H1 (cell line): ENCODE measurements at regions of chr19 and their contacts with region 1.

Region 1: DNA sequence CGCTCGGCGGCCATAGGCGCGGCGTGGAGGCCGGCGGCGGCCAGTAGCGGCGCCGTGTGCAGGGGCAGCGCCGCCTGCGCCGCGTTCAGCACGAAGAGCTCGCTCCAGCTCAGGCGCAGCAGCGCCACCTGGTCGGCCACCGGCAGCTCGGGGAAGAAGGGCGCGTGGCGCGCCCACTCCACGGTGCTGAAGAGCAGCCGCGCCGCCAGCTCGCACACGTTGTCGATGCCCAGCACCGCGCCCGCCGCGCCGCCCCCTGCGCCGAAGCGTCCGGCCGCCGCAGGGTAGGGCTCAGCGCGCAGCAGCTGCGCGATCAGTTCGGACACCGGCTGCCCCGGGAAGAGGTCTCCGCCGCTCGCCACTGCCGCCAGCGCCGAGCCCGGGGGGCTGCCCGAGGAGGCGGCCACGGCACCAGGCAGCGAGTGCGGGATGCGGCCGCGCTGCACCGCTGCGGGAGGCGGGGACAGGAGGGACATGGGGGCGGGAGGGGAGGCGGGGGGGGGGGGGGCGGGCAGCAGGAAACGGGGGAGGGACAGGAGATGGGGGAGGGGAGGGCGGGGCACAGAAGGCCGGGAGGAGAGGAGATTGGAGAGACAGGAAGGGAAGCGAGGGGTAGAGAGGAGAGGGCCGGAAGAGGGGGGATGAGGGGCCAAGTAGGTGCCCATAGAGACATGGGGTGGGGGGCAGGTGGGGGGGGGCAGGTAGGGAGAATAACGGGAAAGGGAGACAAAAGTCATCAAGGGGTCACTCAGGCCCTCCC is 9.8 kb downstream of the OCEL1 start:
- DNase-seq: peak in 1 of 2 experiments; percentile 80
- H3K4me3 ChIP-seq: peak overlapping the region; percentile 80 to 89 (median 86)
- H3K27ac ChIP-seq: peak overlapping the region; percentile 64; the same call in 1 of the 2 replicates
- H3K4me1 ChIP-seq: peaks cover 3 to 11% (median 7%) of the 10 kb centered on the region in 4 experiments
- H3K27me3 ChIP-seq: no peaks in the 10 kb centered on the region
- CTCF ChIP-seq: peak; percentile 32 to 51 (median 45)
- EP300 ChIP-seq: no peak
- POLR2A ChIP-seq: no peak; a peak in 1 of 3 replicates
- RAD21 ChIP-seq: peak; percentile 23 to 37

Region 2: DNA sequence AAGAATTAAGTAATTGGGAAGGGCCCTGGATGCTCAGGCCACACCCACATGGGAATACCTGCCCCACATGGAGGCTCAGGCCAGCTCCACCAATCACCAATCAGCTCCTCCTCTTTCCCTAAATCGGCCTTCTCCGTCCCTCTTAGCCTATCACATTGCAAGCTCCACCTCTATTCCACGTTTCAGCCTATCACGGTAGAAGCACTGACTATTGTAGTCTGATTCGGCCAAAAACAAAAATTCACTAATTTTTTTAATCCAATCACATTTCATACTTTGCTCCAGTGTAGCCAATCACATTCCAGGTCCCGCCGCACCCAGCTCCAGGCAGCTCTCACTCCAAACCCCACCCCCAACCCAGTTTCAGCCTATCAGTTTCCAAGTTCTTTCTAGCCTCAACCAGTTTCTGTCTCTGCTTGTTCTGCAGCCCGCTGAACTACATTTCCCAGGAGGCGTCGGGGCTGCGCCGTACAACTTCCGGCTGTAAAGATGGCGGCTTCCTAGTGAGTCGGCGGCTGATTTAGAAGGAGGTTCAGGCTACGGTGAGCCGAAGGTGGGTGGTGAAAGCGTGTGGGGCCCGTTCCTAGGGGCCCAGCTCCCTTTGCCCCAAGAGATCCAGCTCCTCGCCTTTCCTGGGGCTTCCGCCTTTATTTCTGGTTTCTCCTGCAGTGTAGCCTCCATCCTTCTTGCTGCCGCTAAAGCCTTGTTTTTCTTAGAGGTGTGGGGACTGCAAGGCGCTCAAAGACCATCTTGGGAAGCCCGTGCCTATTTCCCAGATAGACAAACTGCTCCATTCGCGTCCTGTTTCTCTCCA is 31.4 kb after region 1 on chr19 and contains the start of gene BABAM1:
- CTCF ChIA-PET with region 1: interaction called, 8 read pairs
- POLR2A ChIA-PET with region 1: interaction called, 10 read pairs
- DNase-seq: peak; percentile 88 to 96
- H3K4me3 ChIP-seq: peak within 1 kb of the TSS; percentile 71 to 100 (median 95)
- H3K27ac ChIP-seq: peak within 1 kb of the TSS; percentile 60; the same call in 1 of the 2 replicates
- H3K4me1 ChIP-seq: peaks cover 0 to 8% (median 2%) of the 10 kb centered on the region in 4 experiments; a peak in 5 of 7 replicates
- H3K27me3 ChIP-seq: no peaks in the 10 kb centered on the region
- CTCF ChIP-seq: no peak
- EP300 ChIP-seq: no peak
- POLR2A ChIP-seq: peak; percentile 50 to 94
- RAD21 ChIP-seq: no peak
- total RNA-seq, gene BABAM1: 127 and 134 TPM in 2 replicates